Panc1 (cell line): ENCODE measurements at regions of chr1 and their contacts with region 1.

Region 1: DNA sequence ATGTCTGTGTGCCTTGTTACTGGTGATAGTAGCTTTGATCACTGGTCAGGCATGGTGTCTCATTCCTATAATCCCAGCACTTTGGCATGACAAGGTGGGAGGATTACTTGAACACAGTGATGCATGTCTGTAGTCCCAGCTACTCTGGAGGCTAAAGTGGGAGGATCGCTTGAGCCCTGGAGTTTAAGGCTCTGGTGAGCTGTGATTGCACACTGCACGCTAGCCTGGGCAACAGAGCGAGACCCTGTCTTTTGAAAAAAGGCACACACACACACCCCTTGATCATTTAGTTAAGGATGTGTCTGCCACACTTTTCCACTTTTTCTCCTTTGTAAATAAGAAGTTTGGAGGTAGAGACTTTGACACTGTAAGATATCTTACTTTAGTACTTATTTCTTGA is 15.1 kb downstream of the MIGA1 start:
- DNase-seq: no peak
- ATAC-seq: no peak
- H3K4me3 ChIP-seq: no peak overlapping the region
- H3K27ac ChIP-seq: no peak overlapping the region
- H3K4me1 ChIP-seq: no peaks in the 10 kb centered on the region
- H3K27me3 ChIP-seq: no peaks in the 10 kb centered on the region
- CTCF ChIP-seq: no peak

Region 2: DNA sequence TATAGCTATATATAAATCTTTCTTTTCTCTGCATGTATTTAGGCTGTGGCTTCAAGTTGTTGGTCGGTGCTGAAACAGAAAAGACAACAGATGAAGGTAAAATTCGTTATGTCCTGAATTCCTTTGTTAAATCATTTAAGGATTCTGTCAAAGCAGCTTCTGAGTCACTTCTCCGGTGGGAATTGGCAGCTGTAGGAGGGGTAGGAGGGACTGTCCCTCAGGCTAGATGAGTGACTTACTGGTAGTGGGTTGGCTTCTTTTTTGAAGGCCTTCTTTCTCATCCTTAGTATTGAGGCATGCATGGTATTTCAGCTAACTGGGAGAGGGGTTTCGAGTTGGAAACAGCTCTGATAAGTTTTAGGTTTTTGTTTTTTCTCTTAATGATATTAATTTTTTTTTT is 71.7 kb after region 1 on chr1:
- CTCF ChIA-PET with region 1: no interaction called
- POLR2A ChIA-PET with region 1: interaction called, 13 read pairs
- in situ Hi-C with region 1: no loop called
- intact Hi-C with region 1: no loop called
- DNase-seq: no peak
- ATAC-seq: no peak
- H3K4me3 ChIP-seq: no peak overlapping the region
- H3K27ac ChIP-seq: no peak overlapping the region
- H3K4me1 ChIP-seq: no peaks in the 10 kb centered on the region
- H3K27me3 ChIP-seq: no peaks in the 10 kb centered on the region
- CTCF ChIP-seq: no peak

Region 3: GRCh38 chr1:77926561-77927357 is 132.2 kb after region 1 on chr1:
- CTCF ChIA-PET with region 1: no interaction called
- POLR2A ChIA-PET with region 1: no interaction called
- in situ Hi-C with region 1: no loop called
- intact Hi-C with region 1: no loop called
- DNase-seq: no peak
- ATAC-seq: no peak
- H3K4me3 ChIP-seq: peak overlapping the region; percentile 16 to 38
- H3K27ac ChIP-seq: peak overlapping the region; percentile 62; the same call in 1 of the 2 replicates
- H3K4me1 ChIP-seq: no peaks in the 10 kb centered on the region
- H3K27me3 ChIP-seq: no peaks in the 10 kb centered on the region
- CTCF ChIP-seq: no peak